ENCODE measurements at regions of chr12 and their contacts with region 1.

Region 1: DNA sequence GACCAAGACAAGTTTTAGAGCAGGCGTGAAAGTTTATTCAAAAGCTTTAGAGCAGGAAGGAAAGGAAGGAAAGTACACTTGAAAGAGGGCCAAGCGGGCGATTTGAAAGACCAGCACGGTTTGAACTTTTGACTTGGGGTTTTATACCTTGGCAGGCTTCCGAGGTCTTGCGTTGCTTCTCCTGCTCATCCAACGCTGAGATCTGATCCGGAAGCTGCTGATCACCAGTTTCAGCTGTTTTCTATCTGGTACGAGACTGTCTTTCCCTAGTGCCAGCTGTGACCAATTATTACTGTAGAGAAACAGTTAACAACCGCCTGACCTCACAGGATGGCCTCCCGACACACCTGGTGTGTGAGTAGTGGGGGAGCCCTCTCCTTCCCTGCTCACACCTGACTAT is 20.6 kb upstream of the SNRPF start:
- DNase-seq: peak; percentile 72
- ATAC-seq: peak; percentile 38
- H3K4me3 ChIP-seq: no peak overlapping the region
- H3K27ac ChIP-seq: no peak overlapping the region
- H3K4me1 ChIP-seq: peaks cover 8% of the 10 kb centered on the region; the same call in 1 of the 2 replicates
- H3K27me3 ChIP-seq: no peaks in the 10 kb centered on the region
- CTCF ChIP-seq: no peak
- POLR2A ChIP-seq: no peak
- RAD21 ChIP-seq: no peak

Region 2: DNA sequence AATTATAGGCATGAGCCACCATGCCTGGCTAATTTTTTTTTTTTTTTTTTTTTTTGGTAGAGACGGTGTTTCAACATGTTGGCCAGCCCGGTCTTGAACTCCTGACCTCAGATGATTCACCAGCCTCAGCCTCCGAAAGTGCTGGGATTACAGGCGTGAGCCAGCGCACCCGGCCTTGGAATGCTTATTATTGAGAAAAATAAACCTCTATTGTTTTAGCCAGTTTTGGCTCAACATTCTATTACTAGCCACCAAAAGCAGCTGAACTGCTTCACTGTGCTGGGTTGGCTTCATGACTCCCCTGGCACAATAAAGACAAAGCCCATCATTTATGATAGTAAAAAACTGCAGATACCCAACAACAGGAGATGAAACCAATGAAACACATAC is 1285.0 kb before region 1 on chr12:
- CTCF ChIA-PET with region 1: no interaction called
- POLR2A ChIA-PET with region 1: no interaction called
- dilution Hi-C with region 1: no loop called
- in situ Hi-C with region 1: no loop called
- intact Hi-C with region 1: loop called (anchors 10 kb)
- DNase-seq: peak; percentile 43
- ATAC-seq: no peak
- H3K4me3 ChIP-seq: no peak overlapping the region
- H3K27ac ChIP-seq: no peak overlapping the region
- H3K4me1 ChIP-seq: no peaks in the 10 kb centered on the region
- H3K27me3 ChIP-seq: no peaks in the 10 kb centered on the region; the same call in 1 of the 2 replicates
- CTCF ChIP-seq: no peak
- POLR2A ChIP-seq: no peak
- RAD21 ChIP-seq: no peak

Region 3: GRCh38 chr12:95790033-95790911 is 47.9 kb before region 1 on chr12 and contains the start of gene NTN4:
- CTCF ChIA-PET with region 1: no interaction called
- POLR2A ChIA-PET with region 1: no interaction called
- dilution Hi-C with region 1: no loop called
- in situ Hi-C with region 1: no loop called
- intact Hi-C with region 1: no loop called
- DNase-seq: peak; percentile 24
- ATAC-seq: peak; percentile 63
- H3K4me3 ChIP-seq: peak within 1 kb of the TSS; percentile 66
- H3K27ac ChIP-seq: peak within 1 kb of the TSS; percentile 51
- H3K4me1 ChIP-seq: peaks cover 15% of the 10 kb centered on the region
- H3K27me3 ChIP-seq: peaks cover 10% of the 10 kb centered on the region
- CTCF ChIP-seq: no peak
- POLR2A ChIP-seq: no peak; the same call in 1 of the 2 replicates
- RAD21 ChIP-seq: 0 out of 2 replicates have a peak, but pooled peaks have one; percentile 1
- total RNA-seq, gene NTN4: 38.6 and 56.6 TPM in 2 replicates

Region 4: DNA sequence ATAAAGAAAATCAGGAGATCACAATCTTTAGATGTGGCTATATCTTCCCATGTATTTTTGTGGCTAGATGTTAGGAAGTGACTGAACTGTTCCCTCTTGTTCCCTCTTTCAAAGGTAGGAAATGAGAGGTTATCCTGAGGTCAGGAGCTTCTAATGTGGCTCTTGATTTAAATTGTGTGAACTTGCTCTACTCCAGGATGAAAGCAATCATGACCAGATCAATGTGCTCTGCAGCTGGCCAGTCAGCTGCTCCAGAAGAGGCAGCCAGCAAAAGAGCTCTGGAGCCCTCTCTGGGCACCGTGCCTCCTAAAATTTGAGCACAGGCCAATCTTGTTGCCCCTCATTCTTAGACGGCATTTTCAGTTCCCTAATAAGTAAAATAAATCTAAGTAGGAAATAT is 530.1 kb after region 1 on chr12:
- CTCF ChIA-PET with region 1: no interaction called
- POLR2A ChIA-PET with region 1: no interaction called
- dilution Hi-C with region 1: no loop called
- in situ Hi-C with region 1: no loop called
- intact Hi-C with region 1: no loop called
- DNase-seq: no peak
- ATAC-seq: no peak
- H3K4me3 ChIP-seq: no peak overlapping the region
- H3K27ac ChIP-seq: no peak overlapping the region
- H3K4me1 ChIP-seq: peaks cover 6% of the 10 kb centered on the region
- H3K27me3 ChIP-seq: no peaks in the 10 kb centered on the region
- CTCF ChIP-seq: no peak
- POLR2A ChIP-seq: no peak
- RAD21 ChIP-seq: no peak

Measured in IMR-90 (cell line).